Activated B cell treated with CpG ODN at 0.5 μM for 24 hours (primary cell): ENCODE measurements at regions of chr9 and their contacts with region 1.

Region 1: DNA sequence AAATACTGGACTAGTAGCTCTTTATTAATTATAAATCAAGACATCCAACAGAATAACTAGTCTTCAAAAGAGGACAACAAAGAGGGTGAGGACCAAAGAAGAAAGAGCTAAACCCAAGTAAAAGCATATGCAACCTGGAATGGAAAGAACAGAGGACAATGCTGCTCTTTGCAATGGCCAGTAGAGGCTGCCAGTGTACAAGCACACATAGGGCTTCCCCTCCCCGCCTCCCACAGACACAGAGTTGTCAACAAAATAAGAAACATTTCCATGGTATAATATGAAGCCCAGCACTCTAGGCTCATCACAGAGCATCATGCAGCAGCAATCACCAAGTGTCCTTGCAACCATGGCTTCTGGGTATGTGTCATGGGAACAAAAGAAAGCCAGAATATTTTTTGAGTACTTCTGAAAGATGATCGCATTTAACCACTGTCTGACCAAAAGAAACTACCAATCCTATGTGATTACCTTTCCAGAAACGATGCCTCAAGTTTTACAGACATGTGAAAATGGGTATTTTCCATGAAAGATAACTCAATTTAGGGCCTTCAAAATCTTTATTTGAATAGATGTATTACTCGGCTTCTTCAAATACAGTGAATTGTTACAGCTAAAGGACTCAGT is 58.1 kb downstream of the RFX3 start:
- DNase-seq: no peak
- ATAC-seq: peak; percentile 100
- H3K4me3 Mint-ChIP-seq: no peak overlapping the region
- H3K27ac Mint-ChIP-seq: no peak overlapping the region
- H3K4me1 Mint-ChIP-seq: peaks cover 15% of the 10 kb centered on the region
- H3K27me3 Mint-ChIP-seq: no peaks in the 10 kb centered on the region
- CTCF ChIP-seq: peak; percentile 78

Region 2: GRCh38 chr9:2764353-2764752 is 703.4 kb before region 1 on chr9:
- CTCF ChIA-PET with region 1: no interaction called
- POLR2A ChIA-PET with region 1: no interaction called
- intact Hi-C with region 1: no loop called
- DNase-seq: no peak
- ATAC-seq: no peak
- H3K4me3 Mint-ChIP-seq: no peak overlapping the region
- H3K27ac Mint-ChIP-seq: no peak overlapping the region
- H3K4me1 Mint-ChIP-seq: peaks cover 6% of the 10 kb centered on the region
- H3K27me3 Mint-ChIP-seq: no peaks in the 10 kb centered on the region
- CTCF ChIP-seq: no peak

Region 3: GRCh38 chr9:3647652-3648051 is 179.9 kb after region 1 on chr9:
- CTCF ChIA-PET with region 1: interaction called, 3 read pairs
- POLR2A ChIA-PET with region 1: no interaction called
- intact Hi-C with region 1: loop called (anchors 1 kb)
- DNase-seq: no peak
- ATAC-seq: no peak
- H3K4me3 Mint-ChIP-seq: no peak overlapping the region
- H3K27ac Mint-ChIP-seq: no peak overlapping the region
- H3K4me1 Mint-ChIP-seq: no peaks in the 10 kb centered on the region
- H3K27me3 Mint-ChIP-seq: no peaks in the 10 kb centered on the region
- CTCF ChIP-seq: no peak

Region 4: GRCh38 chr9:3732077-3733038 is 264.7 kb after region 1 on chr9:
- CTCF ChIA-PET with region 1: interaction called, 6 read pairs
- POLR2A ChIA-PET with region 1: no interaction called
- intact Hi-C with region 1: loop called (anchors 1 kb)
- DNase-seq: no peak
- ATAC-seq: peak; percentile 79
- H3K4me3 Mint-ChIP-seq: peak overlapping the region; percentile 25
- H3K27ac Mint-ChIP-seq: no peak overlapping the region
- H3K4me1 Mint-ChIP-seq: peaks cover 7% of the 10 kb centered on the region
- H3K27me3 Mint-ChIP-seq: no peaks in the 10 kb centered on the region
- CTCF ChIP-seq: no peak

Region 5: GRCh38 chr9:3875364-3876132 is 407.8 kb after region 1 on chr9:
- CTCF ChIA-PET with region 1: no interaction called
- POLR2A ChIA-PET with region 1: no interaction called
- intact Hi-C with region 1: loop called (anchors 10 kb)
- DNase-seq: no peak
- ATAC-seq: no peak
- H3K4me3 Mint-ChIP-seq: no peak overlapping the region
- H3K27ac Mint-ChIP-seq: no peak overlapping the region
- H3K4me1 Mint-ChIP-seq: peaks cover 3% of the 10 kb centered on the region
- H3K27me3 Mint-ChIP-seq: peaks cover 2% of the 10 kb centered on the region
- CTCF ChIP-seq: no peak

Region 6: DNA sequence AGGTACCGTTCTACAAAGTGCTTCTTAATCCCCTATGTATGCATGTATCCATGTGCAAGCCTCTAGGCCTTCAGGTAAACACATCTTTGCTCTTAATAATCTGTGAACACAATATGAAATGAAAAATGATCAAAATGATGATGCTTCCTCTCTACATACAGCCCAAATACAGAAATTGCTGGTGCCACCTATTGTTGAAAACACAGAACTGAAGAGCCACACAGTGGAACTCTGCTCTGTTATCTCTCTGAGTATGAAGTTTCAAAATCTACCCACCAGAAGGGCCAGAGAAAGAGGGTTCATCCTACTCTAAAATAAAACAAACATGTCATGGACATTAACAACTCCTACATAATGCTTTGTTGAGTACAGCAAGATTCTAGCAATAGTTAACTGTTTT is 760.9 kb after region 1 on chr9:
- CTCF ChIA-PET with region 1: interaction called, 3 read pairs
- POLR2A ChIA-PET with region 1: no interaction called
- intact Hi-C with region 1: loop called (anchors 10 kb)
- DNase-seq: no peak
- ATAC-seq: no peak
- H3K4me3 Mint-ChIP-seq: no peak overlapping the region
- H3K27ac Mint-ChIP-seq: no peak overlapping the region
- H3K4me1 Mint-ChIP-seq: no peaks in the 10 kb centered on the region
- H3K27me3 Mint-ChIP-seq: no peaks in the 10 kb centered on the region
- CTCF ChIP-seq: no peak

Region 7: DNA sequence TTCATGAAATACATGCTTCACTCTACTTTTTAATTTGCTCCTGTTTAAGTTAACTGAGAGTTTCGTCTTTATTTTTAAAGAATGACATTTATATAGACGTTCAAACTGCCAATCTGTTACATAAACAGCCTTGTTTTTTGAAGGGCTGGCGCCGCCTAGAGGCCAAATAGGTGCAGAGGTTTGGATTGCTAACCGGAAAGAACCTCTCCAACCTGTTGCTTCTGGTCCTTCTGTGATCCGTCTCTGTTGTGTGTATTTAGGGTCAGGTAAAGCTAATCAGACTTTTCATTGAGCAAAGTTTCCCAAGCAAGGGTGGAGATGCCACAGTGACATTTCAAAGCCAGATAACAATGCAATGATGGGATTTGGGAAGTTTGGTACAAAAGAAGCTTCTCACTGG is 871.7 kb after region 1 on chr9:
- CTCF ChIA-PET with region 1: interaction called, 4 read pairs
- POLR2A ChIA-PET with region 1: no interaction called
- intact Hi-C with region 1: loop called (anchors 10 kb)
- DNase-seq: peak; percentile 34
- ATAC-seq: peak; percentile 56
- H3K4me3 Mint-ChIP-seq: no peak overlapping the region
- H3K27ac Mint-ChIP-seq: no peak overlapping the region
- H3K4me1 Mint-ChIP-seq: peaks cover 2% of the 10 kb centered on the region
- H3K27me3 Mint-ChIP-seq: peaks cover 13% of the 10 kb centered on the region
- CTCF ChIP-seq: no peak

Region 8: GRCh38 chr9:4366591-4367330 is 899.1 kb after region 1 on chr9:
- CTCF ChIA-PET with region 1: no interaction called
- POLR2A ChIA-PET with region 1: no interaction called
- intact Hi-C with region 1: loop called (anchors 10 kb)
- DNase-seq: no peak
- ATAC-seq: no peak
- H3K4me3 Mint-ChIP-seq: no peak overlapping the region
- H3K27ac Mint-ChIP-seq: no peak overlapping the region
- H3K4me1 Mint-ChIP-seq: no peaks in the 10 kb centered on the region
- H3K27me3 Mint-ChIP-seq: peaks cover 10% of the 10 kb centered on the region
- CTCF ChIP-seq: peak; percentile 31